ENCODE measurements at regions of chr2 and their contacts with region 1.

Region 1: GRCh38 chr2:38750891-38751595 is at the start of gene SRSF7:
- DNase-seq: peak; percentile 97
- H3K4me3 ChIP-seq: peak within 1 kb of the TSS; percentile 100
- CTCF ChIP-seq: no peak

Region 2: DNA sequence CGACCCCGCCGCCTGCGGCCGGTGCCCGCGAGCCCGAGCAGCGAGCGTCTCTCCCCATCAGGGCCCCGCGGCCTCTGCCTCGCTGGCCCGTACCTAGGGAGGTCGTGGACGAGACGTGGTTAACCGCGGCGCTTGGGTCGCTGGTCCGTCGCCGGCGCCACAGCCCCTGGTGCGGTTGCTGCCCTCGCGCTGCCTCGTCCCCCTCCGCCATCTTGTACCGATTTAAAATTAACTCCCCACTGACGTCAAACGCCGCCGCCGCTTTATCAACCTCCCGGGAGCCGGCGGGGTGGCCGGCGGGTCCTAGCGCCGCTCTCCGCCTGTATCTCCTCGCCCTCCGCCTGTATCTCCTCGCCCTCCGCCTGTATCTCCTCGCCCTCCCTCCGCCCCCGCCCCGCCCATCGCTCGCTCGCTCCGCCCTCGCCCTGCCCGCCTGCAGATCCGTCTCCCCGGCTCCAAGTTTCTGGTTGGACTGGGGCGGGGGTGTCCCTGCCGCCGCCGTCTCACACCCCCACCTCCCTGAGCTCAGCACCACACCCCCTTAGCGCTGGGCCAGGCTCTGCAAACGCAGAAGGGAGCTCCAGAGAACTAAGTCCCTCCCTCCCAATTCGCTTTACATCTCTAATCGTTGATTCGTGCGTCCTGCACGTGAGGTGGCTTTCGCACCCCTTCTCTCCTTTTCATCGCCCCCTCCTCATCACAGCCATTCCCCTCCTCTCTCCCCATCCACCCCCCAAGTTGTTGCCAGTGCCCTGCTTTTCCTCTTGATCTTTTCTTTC is 373.8 kb before region 1 on chr2 and contains the start of gene ATL2:
- CTCF ChIA-PET with region 1: no interaction called
- POLR2A ChIA-PET with region 1: interaction called, 19 read pairs
- DNase-seq: peak; percentile 53
- H3K4me3 ChIP-seq: peak within 1 kb of the TSS; percentile 86
- CTCF ChIP-seq: peak; percentile 0

Region 3: GRCh38 chr2:38610851-38611801 is 139.9 kb before region 1 on chr2:
- CTCF ChIA-PET with region 1: no interaction called
- POLR2A ChIA-PET with region 1: interaction called, 11 read pairs
- DNase-seq: no peak
- H3K4me3 ChIP-seq: no peak overlapping the region
- CTCF ChIP-seq: no peak

Region 4: GRCh38 chr2:38653715-38654527 is 97.1 kb before region 1 on chr2:
- CTCF ChIA-PET with region 1: no interaction called
- POLR2A ChIA-PET with region 1: no interaction called
- DNase-seq: no peak
- H3K4me3 ChIP-seq: no peak overlapping the region
- CTCF ChIP-seq: no peak

Region 5: DNA sequence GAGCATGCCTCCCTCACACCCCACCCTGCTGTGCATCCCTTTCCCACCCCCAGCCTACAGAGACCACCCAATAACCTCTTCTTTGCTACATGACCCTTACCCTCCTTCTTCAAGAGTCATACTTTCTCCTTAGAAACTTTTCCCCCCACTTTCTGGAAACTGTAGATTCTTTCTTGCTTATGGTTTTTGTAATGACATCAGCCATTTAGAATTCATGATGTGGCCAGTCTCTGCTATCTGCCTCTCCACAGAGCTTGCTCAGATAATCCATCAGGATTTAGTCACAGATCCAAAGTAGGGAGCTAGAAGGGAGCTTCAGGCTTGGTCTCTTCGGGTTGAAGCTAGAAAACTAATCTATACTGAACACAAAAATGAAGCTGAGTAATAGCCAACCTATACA is 48.6 kb before region 1 on chr2:
- CTCF ChIA-PET with region 1: no interaction called
- POLR2A ChIA-PET with region 1: interaction called, 18 read pairs
- DNase-seq: peak; percentile 81
- H3K4me3 ChIP-seq: no peak overlapping the region
- CTCF ChIP-seq: no peak

Region 6: GRCh38 chr2:38712876-38713275 is 38.2 kb before region 1 on chr2:
- CTCF ChIA-PET with region 1: no interaction called
- POLR2A ChIA-PET with region 1: no interaction called
- DNase-seq: no peak
- H3K4me3 ChIP-seq: no peak overlapping the region
- CTCF ChIP-seq: no peak

Region 7: GRCh38 chr2:38765149-38765548 is 14.1 kb after region 1 on chr2:
- CTCF ChIA-PET with region 1: interaction called, 7 read pairs
- POLR2A ChIA-PET with region 1: interaction called, 27 read pairs
- DNase-seq: peak; percentile 55
- H3K4me3 ChIP-seq: no peak overlapping the region
- CTCF ChIP-seq: no peak

Region 8: GRCh38 chr2:38778687-38779082 is 27.6 kb after region 1 on chr2:
- CTCF ChIA-PET with region 1: no interaction called
- POLR2A ChIA-PET with region 1: interaction called, 13 read pairs
- DNase-seq: no peak
- H3K4me3 ChIP-seq: peak overlapping the region; percentile 71
- CTCF ChIP-seq: no peak